ENCODE measurements at regions of chr12 and their contacts with region 1.

Region 1: DNA sequence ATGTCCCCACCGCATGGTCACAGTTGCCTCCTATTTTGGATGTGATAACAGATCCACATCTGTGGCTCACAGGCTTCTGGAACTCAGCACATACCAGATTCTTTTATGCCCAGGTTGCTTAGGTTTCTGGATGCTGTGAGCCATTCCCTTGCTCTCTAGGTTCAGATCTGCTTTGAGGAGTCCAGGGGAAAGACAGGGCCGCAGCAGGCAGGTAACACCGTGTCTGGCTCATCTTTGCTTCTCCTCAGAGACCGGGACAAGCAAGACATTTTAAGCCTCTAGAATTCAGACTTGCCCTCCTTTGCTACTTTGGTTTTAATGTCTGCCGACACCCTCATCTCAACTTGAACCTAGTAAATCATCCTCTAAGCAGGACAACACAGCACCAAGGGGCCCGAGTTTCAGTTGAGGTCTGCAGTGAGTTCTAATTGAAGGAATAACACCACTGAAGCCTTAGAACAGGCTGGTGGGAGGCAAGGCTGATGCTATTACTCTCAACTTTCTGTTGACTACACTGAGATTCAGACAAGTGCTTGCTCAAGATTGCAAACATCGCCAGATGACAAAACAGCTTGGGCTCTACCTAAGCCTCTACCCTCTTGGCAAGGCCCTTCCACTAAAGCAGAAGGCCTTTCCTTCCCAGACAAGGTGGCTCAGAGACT is 55.3 kb downstream of the MDM2 start:
- DNase-seq: no peak
- ATAC-seq: no peak; the same call in 1 of the 2 replicates
- H3K4me3 ChIP-seq: no peak overlapping the region
- H3K27ac ChIP-seq: no peak overlapping the region
- H3K4me1 ChIP-seq: no peaks in the 10 kb centered on the region
- H3K27me3 ChIP-seq: no peaks in the 10 kb centered on the region
- CTCF ChIP-seq: no peak
- POLR2A ChIP-seq: no peak
- RAD21 ChIP-seq: no peak

Region 2: GRCh38 chr12:68727776-68728175 is 135.5 kb before region 1 on chr12:
- CTCF ChIA-PET with region 1: no interaction called
- POLR2A ChIA-PET with region 1: no interaction called
- dilution Hi-C with region 1: no loop called
- in situ Hi-C with region 1: no loop called
- intact Hi-C with region 1: no loop called
- DNase-seq: no peak
- ATAC-seq: no peak
- H3K4me3 ChIP-seq: no peak overlapping the region
- H3K27ac ChIP-seq: no peak overlapping the region
- H3K4me1 ChIP-seq: no peaks in the 10 kb centered on the region
- H3K27me3 ChIP-seq: no peaks in the 10 kb centered on the region
- CTCF ChIP-seq: no peak
- POLR2A ChIP-seq: no peak
- RAD21 ChIP-seq: no peak

Region 3: DNA sequence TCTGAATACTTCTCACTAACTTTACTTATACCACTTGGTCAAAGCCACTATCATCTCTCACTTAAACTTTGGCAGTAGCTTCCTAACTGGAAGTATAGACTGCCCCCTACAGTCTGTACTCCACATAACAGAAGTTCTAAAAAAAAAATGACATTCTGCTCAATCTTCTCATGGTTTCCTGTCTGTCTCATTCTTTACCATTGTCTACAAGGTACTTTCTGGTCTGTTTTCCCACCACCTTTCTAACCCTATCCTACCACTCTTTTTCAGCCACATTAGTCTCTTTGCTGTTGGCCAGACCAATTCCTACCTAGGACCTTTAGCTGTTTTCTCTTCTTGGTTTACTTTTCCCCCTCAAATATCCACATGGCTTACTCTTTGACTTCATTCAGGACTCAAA is 390.8 kb after region 1 on chr12:
- CTCF ChIA-PET with region 1: interaction called, 3 read pairs
- POLR2A ChIA-PET with region 1: no interaction called
- dilution Hi-C with region 1: no loop called
- in situ Hi-C with region 1: loop called (anchors 10 kb)
- intact Hi-C with region 1: loop called (anchors 5 kb)
- DNase-seq: peak; percentile 46
- ATAC-seq: peak; percentile 29; the same call in 1 of the 2 replicates
- H3K4me3 ChIP-seq: no peak overlapping the region
- H3K27ac ChIP-seq: no peak overlapping the region
- H3K4me1 ChIP-seq: peaks cover 2% of the 10 kb centered on the region; the same call in 1 of the 2 replicates
- H3K27me3 ChIP-seq: no peaks in the 10 kb centered on the region
- CTCF ChIP-seq: peak; percentile 61
- POLR2A ChIP-seq: no peak
- RAD21 ChIP-seq: peak; percentile 53

Region 4: GRCh38 chr12:69987579-69988091 is 1124.4 kb after region 1 on chr12:
- CTCF ChIA-PET with region 1: no interaction called
- POLR2A ChIA-PET with region 1: no interaction called
- dilution Hi-C with region 1: no loop called
- in situ Hi-C with region 1: no loop called
- intact Hi-C with region 1: no loop called
- DNase-seq: peak; percentile 94
- ATAC-seq: peak; percentile 76
- H3K4me3 ChIP-seq: no peak overlapping the region
- H3K27ac ChIP-seq: peak overlapping the region; percentile 90
- H3K4me1 ChIP-seq: peaks cover 9% of the 10 kb centered on the region
- H3K27me3 ChIP-seq: no peaks in the 10 kb centered on the region
- CTCF ChIP-seq: no peak
- POLR2A ChIP-seq: no peak; the same call in 1 of the 2 replicates
- RAD21 ChIP-seq: no peak

Measured in IMR-90 (cell line).